Left cardiac atrium (tissue), 4 donors: ENCODE measurements at regions of chr13 and their contacts with region 1.

Region 1: DNA sequence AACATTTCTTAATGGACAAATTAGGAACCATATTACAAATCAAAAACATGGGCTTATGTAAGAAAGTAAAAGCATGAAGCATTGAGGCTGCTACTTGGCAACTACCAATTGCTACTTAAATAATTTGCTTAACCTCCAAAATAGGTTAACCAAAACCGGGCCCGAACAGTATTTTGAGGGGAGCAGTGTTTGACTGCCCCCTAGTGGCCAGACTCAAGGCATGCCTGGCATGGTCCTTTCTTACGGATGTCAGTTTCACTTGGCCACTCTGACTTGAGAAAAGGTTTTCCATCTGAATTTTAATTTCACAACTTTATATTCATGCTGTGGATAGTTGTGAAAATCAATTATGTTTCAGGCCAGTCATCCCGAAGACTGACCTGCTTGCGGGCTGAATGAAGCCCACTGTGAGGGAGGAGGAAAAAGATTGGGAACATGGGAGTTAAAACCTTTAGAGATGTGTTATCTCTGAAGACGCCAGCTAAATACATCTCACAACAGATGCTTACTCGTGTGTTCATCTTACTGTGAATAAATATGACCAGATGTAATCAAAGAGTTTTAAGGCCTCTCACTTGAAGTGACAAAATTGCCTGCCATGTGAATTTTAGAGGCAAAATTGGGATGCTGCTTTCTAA is 2.9 kb downstream of the RXFP2 start:
- DNase-seq: peak; percentile 49
- ATAC-seq: peak; percentile 74 to 88

Region 2: GRCh38 chr13:31236211-31236786 is 505.9 kb before region 1 on chr13:
- intact Hi-C with region 1: loop called in 1 of 2 experiments (anchors 10 kb)
- DNase-seq: no peak
- ATAC-seq: peak in 1 of 2 donors; percentile 38

Region 3: DNA sequence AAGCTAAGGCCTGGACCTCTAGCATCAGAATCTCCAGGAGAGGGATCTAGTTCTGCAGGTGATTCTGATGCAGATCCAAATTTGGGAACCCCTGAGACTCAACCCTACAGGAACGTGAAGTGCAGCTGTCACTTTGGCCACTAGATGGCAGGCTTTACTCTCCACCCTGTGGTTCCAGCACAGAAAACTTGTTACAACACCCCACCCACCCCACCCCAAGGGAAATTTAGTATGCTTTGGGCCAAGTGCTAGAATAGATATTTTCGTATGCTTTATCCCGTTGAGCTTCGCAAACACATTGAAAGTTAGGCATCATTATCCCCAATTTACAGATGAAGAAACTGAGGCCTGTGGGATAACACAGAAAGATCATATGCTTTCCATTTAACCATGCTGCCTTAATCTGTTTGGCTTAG is 310.5 kb before region 1 on chr13:
- intact Hi-C with region 1: loop called (anchors 5 to 10 kb)
- DNase-seq: peak; percentile 48
- ATAC-seq: peak; percentile 47 to 61

Region 4: DNA sequence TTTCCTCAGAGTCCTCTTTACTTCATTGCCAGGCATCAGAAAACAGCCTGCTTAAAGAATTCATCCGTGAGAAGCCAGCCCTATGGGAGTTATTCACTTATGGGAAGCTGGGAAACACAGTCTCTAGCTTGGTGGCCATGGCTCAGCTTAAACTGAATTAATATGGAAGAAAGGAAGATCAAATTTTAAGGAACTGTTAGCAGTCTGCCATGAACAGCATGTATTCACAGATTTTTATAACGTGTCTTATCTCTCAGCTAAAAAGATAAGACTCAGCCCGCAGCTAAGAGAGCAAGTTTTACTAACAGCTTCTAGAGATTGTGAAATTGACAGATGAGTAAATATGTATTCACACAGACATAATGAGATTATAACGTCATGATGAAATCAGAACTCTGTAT is 256.6 kb before region 1 on chr13:
- intact Hi-C with region 1: no loop called
- DNase-seq: no peak
- ATAC-seq: peak; percentile 23 to 82

Region 5: DNA sequence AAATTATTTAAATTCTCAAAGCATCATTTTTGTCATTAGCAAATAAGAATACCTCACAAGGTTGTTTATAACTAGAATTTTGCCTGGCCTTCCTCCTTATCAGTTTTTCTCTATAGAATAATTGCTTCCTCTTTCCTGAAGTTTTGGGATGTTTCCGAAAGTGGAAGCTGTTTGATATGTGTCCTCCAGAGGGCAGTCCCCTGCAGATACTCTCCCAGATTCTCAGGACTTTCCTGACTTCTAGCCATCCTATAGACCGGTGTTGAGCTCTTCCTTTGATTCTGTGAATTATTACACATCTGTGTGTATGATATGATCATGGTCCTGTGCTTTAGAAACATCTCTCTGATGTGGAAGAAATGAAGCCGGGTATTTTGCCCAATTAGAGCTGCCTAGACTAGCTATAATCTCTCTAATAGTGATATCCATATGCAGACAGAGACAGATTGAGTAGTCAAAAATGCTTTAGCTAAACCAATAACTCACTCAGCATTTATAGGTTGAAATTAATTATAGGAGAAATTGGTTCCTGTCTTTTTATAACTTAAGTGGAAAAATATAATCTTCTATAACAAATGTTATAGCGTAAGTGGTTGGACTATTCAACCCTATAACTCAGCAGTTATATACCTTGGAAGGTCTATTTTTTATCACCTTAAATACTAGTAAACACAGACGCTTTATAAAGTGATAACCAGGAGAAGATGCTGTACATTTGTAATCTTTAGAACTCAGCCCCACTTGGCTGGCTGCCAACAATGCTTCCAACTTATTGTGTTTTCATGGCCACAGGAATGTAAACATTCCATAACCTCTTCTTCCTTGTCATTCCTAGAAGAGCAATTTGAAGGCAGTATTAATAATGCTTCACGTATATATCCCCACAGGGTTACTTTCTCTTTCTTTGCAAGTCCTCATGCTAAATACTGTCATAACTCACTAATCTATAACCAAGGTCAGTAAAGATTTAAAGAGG is 203.9 kb before region 1 on chr13:
- intact Hi-C with region 1: loop called in 1 of 2 experiments (anchors 5 kb)
- DNase-seq: no peak
- ATAC-seq: peak in 1 of 2 donors; percentile 47

Region 6: DNA sequence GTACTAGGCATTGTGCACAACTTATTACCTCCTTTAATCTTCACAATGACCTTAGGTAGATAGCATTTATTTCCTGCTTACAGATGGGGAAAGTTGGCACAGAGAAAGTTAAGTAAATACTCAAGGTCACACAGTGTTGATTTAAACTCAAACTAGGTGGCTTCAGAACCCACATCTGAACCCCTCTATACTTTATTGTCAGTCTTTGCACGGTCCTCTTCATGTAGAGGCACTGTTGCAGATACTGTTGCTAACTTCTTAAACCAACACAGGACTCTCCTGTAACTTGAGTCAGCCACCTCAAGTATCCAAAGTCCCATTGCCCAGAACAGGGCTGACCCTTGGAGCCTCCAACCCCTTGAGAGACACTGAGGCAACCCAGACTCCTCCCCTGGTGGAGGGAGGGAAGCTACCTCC is 338.1 kb after region 1 on chr13:
- intact Hi-C with region 1: no loop called
- DNase-seq: no peak
- ATAC-seq: no peak